Esophagus muscularis mucosa (tissue), 4 donors: ENCODE measurements at regions of chr12 and their contacts with region 1.

Region 1: GRCh38 chr12:56189176-56189917 is at the start of gene SMARCC2:
- DNase-seq: peak; percentile 96
- H3K4me3 ChIP-seq: peak within 1 kb of the TSS; percentile 77 to 95 (median 88)
- H3K27ac ChIP-seq: peak within 1 kb of the TSS; percentile 95 to 97 (median 96)
- H3K4me1 ChIP-seq: peaks cover 20 to 40% (median 34%) of the 10 kb centered on the region in 4 donors
- H3K27me3 ChIP-seq: no peaks in the 10 kb centered on the region
- CTCF ChIP-seq: peak; percentile 70 to 81 (median 71)
- EP300 ChIP-seq: no peak
- POLR2A ChIP-seq: no peak
- total RNA-seq, gene SMARCC2: 62.1 to 111 (median 94.3) TPM

Region 2: DNA sequence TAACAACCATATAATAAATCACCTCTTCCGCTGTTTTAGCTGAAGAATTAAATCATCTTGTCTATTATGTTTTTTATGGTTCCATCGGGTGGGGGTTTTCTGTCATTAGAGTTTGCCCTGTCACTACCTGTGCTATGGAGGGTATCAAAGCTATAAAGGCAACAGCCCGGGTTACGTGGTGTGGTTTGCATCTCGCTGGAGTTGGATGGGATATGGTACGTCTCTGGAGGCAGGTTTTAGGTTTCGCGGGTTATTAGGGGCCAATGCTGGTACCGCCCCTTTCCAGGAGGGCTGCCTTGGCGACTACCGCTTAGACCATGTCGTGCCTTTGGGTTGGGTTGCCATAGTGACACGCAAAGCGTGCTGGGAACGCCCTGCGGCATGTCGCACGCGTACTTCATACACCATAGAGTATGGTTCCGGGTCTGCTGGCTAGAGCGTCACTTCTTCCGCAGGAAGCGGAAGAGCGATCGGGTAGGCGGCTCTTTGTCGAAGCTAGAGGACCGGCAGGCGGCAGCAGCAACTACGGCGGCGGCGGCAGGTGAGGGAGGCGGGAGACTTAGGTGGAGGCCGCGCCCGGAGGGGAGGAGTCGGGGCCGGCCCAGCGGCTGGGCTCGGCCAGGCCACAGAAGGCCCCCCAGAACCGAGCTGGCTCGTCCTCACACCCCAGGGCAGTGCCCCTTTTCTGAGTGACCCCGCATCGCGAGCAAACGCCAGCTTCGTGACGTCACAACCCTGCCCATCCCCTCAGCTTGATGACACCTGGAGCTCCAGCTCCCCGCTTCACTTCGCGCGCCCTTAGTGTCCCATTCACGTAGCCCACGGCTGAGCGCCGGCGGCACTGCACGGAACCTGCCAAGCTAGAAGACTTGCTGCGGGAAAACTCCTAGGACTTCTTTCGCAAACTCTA is 71.3 kb before region 1 on chr12 and contains the start of gene ZC3H10:
- intact Hi-C with region 1: loop called (anchors 2 kb)
- DNase-seq: peak; percentile 99
- H3K4me3 ChIP-seq: peak within 1 kb of the TSS; percentile 66 to 86 (median 78)
- H3K27ac ChIP-seq: peak within 1 kb of the TSS; percentile 92 to 98 (median 94)
- H3K4me1 ChIP-seq: peaks cover 47 to 64% (median 54%) of the 10 kb centered on the region in 4 donors
- H3K27me3 ChIP-seq: no peaks in the 10 kb centered on the region
- CTCF ChIP-seq: peak; percentile 48 to 53 (median 48)
- EP300 ChIP-seq: no peak
- POLR2A ChIP-seq: peak; percentile 86
- total RNA-seq, gene ZC3H10: 5.0 to 7.9 (median 6.6) TPM

Region 3: GRCh38 chr12:56127888-56128669 is 61.3 kb before region 1 on chr12 and contains the start of gene ESYT1:
- intact Hi-C with region 1: loop called (anchors 2 kb)
- DNase-seq: peak; percentile 100
- H3K4me3 ChIP-seq: peak within 1 kb of the TSS; percentile 78 to 91 (median 87)
- H3K27ac ChIP-seq: peak within 1 kb of the TSS; percentile 94 to 98 (median 98)
- H3K4me1 ChIP-seq: peaks cover 40 to 60% (median 52%) of the 10 kb centered on the region in 4 donors
- H3K27me3 ChIP-seq: no peaks in the 10 kb centered on the region
- CTCF ChIP-seq: peak in 1 of 3 experiments; percentile 13
- EP300 ChIP-seq: no peak
- POLR2A ChIP-seq: peak; percentile 96
- total RNA-seq, gene ESYT1: 151 to 245 (median 214) TPM

Region 4: GRCh38 chr12:56152318-56153033 is 36.9 kb before region 1 on chr12 and contains the start of gene MYL6B:
- intact Hi-C with region 1: no loop called
- DNase-seq: peak; percentile 98
- H3K4me3 ChIP-seq: peak within 1 kb of the TSS; percentile 67 to 77 (median 70)
- H3K27ac ChIP-seq: peak within 1 kb of the TSS; percentile 89 to 95 (median 94)
- H3K4me1 ChIP-seq: peaks cover 25 to 45% (median 40%) of the 10 kb centered on the region in 4 donors
- H3K27me3 ChIP-seq: no peaks in the 10 kb centered on the region
- CTCF ChIP-seq: peak in 1 of 3 experiments; percentile 25
- EP300 ChIP-seq: no peak
- POLR2A ChIP-seq: no peak
- total RNA-seq, gene MYL6B: 28.5 to 39.4 (median 33.6) TPM

Region 5: GRCh38 chr12:56165369-56165768 is 24.0 kb before region 1 on chr12:
- intact Hi-C with region 1: loop called (anchors 2 kb)
- DNase-seq: no peak
- H3K4me3 ChIP-seq: no peak overlapping the region
- H3K27ac ChIP-seq: peak overlapping the region; percentile 36 to 97 (median 76)
- H3K4me1 ChIP-seq: peaks cover 17 to 49% (median 45%) of the 10 kb centered on the region in 4 donors
- H3K27me3 ChIP-seq: no peaks in the 10 kb centered on the region
- CTCF ChIP-seq: no peak
- EP300 ChIP-seq: no peak
- POLR2A ChIP-seq: no peak

Region 6: GRCh38 chr12:56224102-56224701 is 34.9 kb after region 1 on chr12 and contains the start of gene NABP2:
- intact Hi-C with region 1: loop called (anchors 1 kb)
- DNase-seq: peak; percentile 99
- H3K4me3 ChIP-seq: peak within 1 kb of the TSS; percentile 57 to 65 (median 60)
- H3K27ac ChIP-seq: peak within 1 kb of the TSS; percentile 94 to 98 (median 96)
- H3K4me1 ChIP-seq: peaks cover 38 to 56% (median 50%) of the 10 kb centered on the region in 4 donors
- H3K27me3 ChIP-seq: no peaks in the 10 kb centered on the region
- CTCF ChIP-seq: peak in 2 of 3 experiments; percentile 95 to 98
- EP300 ChIP-seq: no peak
- POLR2A ChIP-seq: no peak
- total RNA-seq, gene NABP2: 27.0 to 36.4 (median 30.9) TPM

Region 7: GRCh38 chr12:56321027-56321426 is 131.7 kb after region 1 on chr12:
- intact Hi-C with region 1: no loop called
- DNase-seq: no peak
- H3K4me3 ChIP-seq: no peak overlapping the region
- H3K27ac ChIP-seq: no peak overlapping the region
- H3K4me1 ChIP-seq: peaks cover 0 to 8% (median 7%) of the 10 kb centered on the region in 4 donors
- H3K27me3 ChIP-seq: no peaks in the 10 kb centered on the region
- CTCF ChIP-seq: no peak
- EP300 ChIP-seq: no peak
- POLR2A ChIP-seq: no peak

Region 8: DNA sequence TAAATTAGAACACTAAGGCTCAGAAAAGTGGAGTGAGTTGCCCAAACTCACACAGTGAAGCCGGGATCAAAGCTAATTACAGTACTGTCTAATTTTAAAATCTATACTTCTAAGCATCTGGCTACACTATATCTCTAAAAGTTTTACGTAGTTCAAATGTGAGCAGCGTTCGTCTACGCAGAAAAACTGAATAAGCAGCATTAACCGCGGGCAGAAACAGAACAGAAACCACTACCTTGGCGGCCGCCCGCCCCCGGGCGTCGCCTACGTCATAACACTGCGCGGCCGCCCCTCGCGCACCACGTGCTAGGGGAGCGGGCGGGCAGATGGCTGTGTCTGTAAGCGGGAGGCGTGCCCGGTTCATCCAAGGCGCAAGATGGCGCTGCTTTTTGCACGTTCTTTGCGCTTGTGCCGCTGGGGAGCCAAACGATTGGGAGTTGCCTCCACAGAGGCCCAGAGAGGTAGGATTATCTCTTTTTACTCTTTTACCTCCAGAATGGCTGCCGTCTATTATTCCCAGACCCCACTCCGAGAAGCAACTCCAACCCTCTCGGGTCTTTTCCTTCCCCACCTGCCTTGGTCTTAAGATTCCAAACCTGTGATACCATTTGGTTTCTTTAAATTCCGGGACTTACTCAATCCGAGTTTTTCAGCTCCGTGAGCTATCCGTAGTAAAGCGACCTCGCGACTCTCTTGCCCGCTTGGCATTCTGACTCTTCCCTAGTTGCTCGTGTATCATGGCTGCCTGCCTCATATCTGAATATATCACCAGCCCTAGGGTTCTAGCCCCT is 279.1 kb after region 1 on chr12 and contains the start of gene SPRYD4:
- intact Hi-C with region 1: loop called (anchors 10 kb)
- DNase-seq: peak; percentile 98
- H3K4me3 ChIP-seq: peak within 1 kb of the TSS; percentile 69 to 88 (median 79)
- H3K27ac ChIP-seq: peak within 1 kb of the TSS; percentile 82 to 92 (median 84)
- H3K4me1 ChIP-seq: peaks cover 11 to 43% (median 28%) of the 10 kb centered on the region in 4 donors
- H3K27me3 ChIP-seq: no peaks in the 10 kb centered on the region
- CTCF ChIP-seq: peak; percentile 20 to 61 (median 50)
- EP300 ChIP-seq: no peak
- POLR2A ChIP-seq: peak; percentile 65
- total RNA-seq, gene SPRYD4: 1.4 to 2.2 (median 1.9) TPM